IMR-90 (cell line): ENCODE measurements at regions of chr11 and their contacts with region 1.

Region 1: DNA sequence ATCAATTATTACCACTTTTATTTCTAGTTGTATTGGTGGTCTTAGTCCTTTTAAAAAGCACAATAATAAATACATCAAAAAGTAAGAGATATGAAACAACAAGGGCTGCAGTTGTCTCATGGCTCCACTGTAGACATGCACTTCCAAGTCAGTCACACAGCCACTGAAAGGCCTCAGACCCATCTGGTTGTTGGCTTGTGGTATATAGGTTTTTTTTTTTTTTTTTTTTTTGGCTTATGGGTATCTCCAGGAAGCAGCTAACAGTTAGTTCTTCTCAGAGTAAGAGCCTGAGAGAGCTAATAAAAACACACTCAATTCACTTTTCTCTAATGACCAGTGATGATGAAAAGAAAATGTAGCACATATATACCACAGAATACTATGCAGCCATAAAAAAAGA is 6.0 kb upstream of the OR52E6 start:
- DNase-seq: no peak
- ATAC-seq: no peak
- H3K4me3 ChIP-seq: no peak overlapping the region
- H3K27ac ChIP-seq: no peak overlapping the region
- H3K4me1 ChIP-seq: no peaks in the 10 kb centered on the region
- H3K27me3 ChIP-seq: no peaks in the 10 kb centered on the region
- CTCF ChIP-seq: no peak
- POLR2A ChIP-seq: no peak
- RAD21 ChIP-seq: no peak

Region 2: DNA sequence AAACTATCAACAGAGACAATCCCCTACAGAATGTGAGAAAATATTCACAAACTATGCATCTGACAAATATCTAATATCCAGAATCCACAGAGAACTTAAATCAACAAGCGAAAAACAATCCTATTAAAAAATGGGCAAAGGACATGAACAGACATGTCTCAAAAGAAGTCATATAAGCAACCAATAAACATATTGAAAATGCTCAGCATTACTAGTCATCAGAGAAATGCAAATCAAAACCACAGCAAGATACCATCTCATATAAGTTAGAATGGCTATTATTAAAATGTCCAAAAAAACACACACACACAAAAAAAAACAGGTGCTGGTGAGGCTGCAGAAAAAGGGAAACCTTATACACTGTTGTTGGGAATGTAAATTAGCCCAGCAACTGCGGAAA is 18.1 kb after region 1 on chr11:
- CTCF ChIA-PET with region 1: no interaction called
- POLR2A ChIA-PET with region 1: no interaction called
- dilution Hi-C with region 1: no loop called
- in situ Hi-C with region 1: no loop called
- intact Hi-C with region 1: loop called (anchors 1 kb)
- DNase-seq: no peak
- ATAC-seq: no peak
- H3K4me3 ChIP-seq: no peak overlapping the region
- H3K27ac ChIP-seq: no peak overlapping the region
- H3K4me1 ChIP-seq: no peaks in the 10 kb centered on the region
- H3K27me3 ChIP-seq: no peaks in the 10 kb centered on the region
- CTCF ChIP-seq: no peak
- POLR2A ChIP-seq: no peak
- RAD21 ChIP-seq: no peak